CD8-positive, alpha-beta T cell (primary cell): ENCODE measurements at regions of chr6 and their contacts with region 1.

Region 1: GRCh38 chr6:2848851-2849250 is 7.2 kb upstream of the SERPINB1 start:
- DNase-seq: peak; percentile 30 to 87 (median 75)
- ATAC-seq: peak; percentile 88
- H3K4me3 ChIP-seq: no peak overlapping the region
- H3K4me3 Mint-ChIP-seq: peak overlapping the region; percentile 27
- H3K27ac ChIP-seq: peak overlapping the region; percentile 1 to 26
- H3K27ac Mint-ChIP-seq: peak overlapping the region; percentile 92
- H3K4me1 ChIP-seq: peaks cover 27% of the 10 kb centered on the region
- H3K4me1 Mint-ChIP-seq: peaks cover 40% of the 10 kb centered on the region
- H3K27me3 ChIP-seq: no peaks in the 10 kb centered on the region
- H3K27me3 Mint-ChIP-seq: no peaks in the 10 kb centered on the region
- CTCF ChIP-seq: no peak

Region 2: GRCh38 chr6:2630362-2630761 is 218.5 kb before region 1 on chr6:
- CTCF ChIA-PET with region 1: no interaction called
- POLR2A ChIA-PET with region 1: no interaction called
- intact Hi-C with region 1: no loop called
- DNase-seq: no peak
- ATAC-seq: no peak
- H3K4me3 ChIP-seq: no peak overlapping the region
- H3K4me3 Mint-ChIP-seq: no peak overlapping the region
- H3K27ac ChIP-seq: no peak overlapping the region
- H3K27ac Mint-ChIP-seq: no peak overlapping the region
- H3K4me1 ChIP-seq: peaks cover 6% of the 10 kb centered on the region
- H3K4me1 Mint-ChIP-seq: peaks cover 9% of the 10 kb centered on the region
- H3K27me3 ChIP-seq: peaks cover 0 to 6% of the 10 kb centered on the region in 2 experiments
- H3K27me3 Mint-ChIP-seq: no peaks in the 10 kb centered on the region
- CTCF ChIP-seq: no peak

Region 3: GRCh38 chr6:2791124-2791974 is 57.5 kb before region 1 on chr6:
- CTCF ChIA-PET with region 1: interaction called, 16 read pairs
- POLR2A ChIA-PET with region 1: interaction called, 3 read pairs
- intact Hi-C with region 1: loop called (anchors 1 to 2 kb)
- DNase-seq: peak in 8 of 9 experiments; percentile 21 to 75 (median 47)
- ATAC-seq: peak; percentile 79
- H3K4me3 ChIP-seq: no peak overlapping the region
- H3K4me3 Mint-ChIP-seq: peak overlapping the region; percentile 13
- H3K27ac ChIP-seq: peak overlapping the region in 1 of 2 experiments; percentile 10
- H3K27ac Mint-ChIP-seq: peak overlapping the region; percentile 77
- H3K4me1 ChIP-seq: peaks cover 33% of the 10 kb centered on the region
- H3K4me1 Mint-ChIP-seq: peaks cover 32% of the 10 kb centered on the region
- H3K27me3 ChIP-seq: no peaks in the 10 kb centered on the region
- H3K27me3 Mint-ChIP-seq: no peaks in the 10 kb centered on the region
- CTCF ChIP-seq: peak; percentile 73

Region 4: GRCh38 chr6:2827142-2827541 is 21.7 kb before region 1 on chr6:
- CTCF ChIA-PET with region 1: no interaction called
- POLR2A ChIA-PET with region 1: no interaction called
- intact Hi-C with region 1: no loop called
- DNase-seq: no peak
- ATAC-seq: no peak
- H3K4me3 ChIP-seq: no peak overlapping the region
- H3K4me3 Mint-ChIP-seq: no peak overlapping the region
- H3K27ac ChIP-seq: no peak overlapping the region
- H3K27ac Mint-ChIP-seq: no peak overlapping the region
- H3K4me1 ChIP-seq: no peaks in the 10 kb centered on the region
- H3K4me1 Mint-ChIP-seq: no peaks in the 10 kb centered on the region
- H3K27me3 ChIP-seq: no peaks in the 10 kb centered on the region
- H3K27me3 Mint-ChIP-seq: no peaks in the 10 kb centered on the region
- CTCF ChIP-seq: no peak

Region 5: DNA sequence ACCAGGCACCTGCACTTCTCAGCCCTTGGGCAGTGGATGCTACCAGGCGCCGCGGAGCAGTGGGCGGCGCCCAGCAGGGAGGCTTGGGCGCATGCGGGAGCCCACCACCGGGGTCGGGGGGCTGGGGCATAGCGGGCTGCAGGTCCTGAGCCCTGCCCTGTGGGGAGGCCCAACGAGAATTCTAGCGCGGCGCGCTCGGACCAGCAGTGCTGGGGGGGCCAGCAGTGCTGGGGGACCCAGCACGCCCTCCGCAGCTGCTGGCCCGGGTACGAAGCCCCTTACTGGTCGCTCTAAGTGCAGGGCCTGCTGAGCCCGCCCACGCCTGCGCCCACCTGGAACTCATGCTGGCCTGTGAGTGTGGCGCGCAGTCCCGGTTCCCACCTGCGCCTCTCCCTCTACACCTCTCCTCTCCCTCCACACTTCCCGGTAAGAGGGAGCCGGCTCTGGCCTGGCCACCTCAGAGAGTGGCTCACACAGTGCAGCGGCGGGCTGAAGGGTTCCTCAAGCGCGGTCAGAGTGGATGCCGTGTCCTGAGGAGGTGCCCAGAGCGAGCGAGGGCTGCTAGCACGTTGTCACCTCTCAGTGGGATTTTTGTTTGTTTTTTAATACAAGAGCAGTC is 21.3 kb after region 1 on chr6:
- CTCF ChIA-PET with region 1: interaction called, 15 read pairs
- POLR2A ChIA-PET with region 1: interaction called, 4 read pairs
- intact Hi-C with region 1: no loop called
- DNase-seq: no peak
- ATAC-seq: no peak
- H3K4me3 ChIP-seq: no peak overlapping the region
- H3K4me3 Mint-ChIP-seq: no peak overlapping the region
- H3K27ac ChIP-seq: no peak overlapping the region
- H3K27ac Mint-ChIP-seq: no peak overlapping the region
- H3K4me1 ChIP-seq: peaks cover 25% of the 10 kb centered on the region
- H3K4me1 Mint-ChIP-seq: peaks cover 47% of the 10 kb centered on the region
- H3K27me3 ChIP-seq: no peaks in the 10 kb centered on the region
- H3K27me3 Mint-ChIP-seq: no peaks in the 10 kb centered on the region
- CTCF ChIP-seq: no peak

Region 6: GRCh38 chr6:2891768-2892170 is 42.9 kb after region 1 on chr6:
- CTCF ChIA-PET with region 1: interaction called, 49 read pairs
- POLR2A ChIA-PET with region 1: interaction called, 4 read pairs
- intact Hi-C with region 1: no loop called
- DNase-seq: peak; percentile 35 to 89 (median 68)
- ATAC-seq: peak; percentile 94
- H3K4me3 ChIP-seq: peak overlapping the region in 1 of 2 experiments; percentile 9
- H3K4me3 Mint-ChIP-seq: peak overlapping the region; percentile 69
- H3K27ac ChIP-seq: peak overlapping the region; percentile 17 to 51
- H3K27ac Mint-ChIP-seq: peak overlapping the region; percentile 94
- H3K4me1 ChIP-seq: peaks cover 29% of the 10 kb centered on the region
- H3K4me1 Mint-ChIP-seq: peaks cover 67% of the 10 kb centered on the region
- H3K27me3 ChIP-seq: no peaks in the 10 kb centered on the region
- H3K27me3 Mint-ChIP-seq: no peaks in the 10 kb centered on the region
- CTCF ChIP-seq: no peak

Region 7: DNA sequence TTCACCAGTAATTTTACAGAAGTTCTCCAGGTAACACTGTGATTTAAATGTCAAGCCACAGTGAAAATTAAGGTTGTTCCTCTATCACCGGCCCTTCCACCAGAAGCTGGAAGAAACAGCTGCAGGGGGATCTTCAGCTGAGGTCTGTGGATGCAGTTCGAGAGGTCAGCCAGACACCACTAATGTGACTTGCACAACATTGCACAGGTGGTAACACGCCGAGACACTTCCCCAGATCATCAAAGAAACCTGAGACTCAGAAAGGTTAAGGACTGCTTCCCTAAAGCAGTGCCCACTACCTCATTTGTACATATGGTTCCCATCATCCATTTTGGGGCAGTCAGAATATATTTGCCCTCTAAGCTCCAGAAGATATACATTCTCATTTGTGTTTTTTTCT is 62.3 kb after region 1 on chr6:
- CTCF ChIA-PET with region 1: interaction called, 202 read pairs
- POLR2A ChIA-PET with region 1: interaction called, 24 read pairs
- intact Hi-C with region 1: loop called (anchors 1 kb)
- DNase-seq: no peak
- ATAC-seq: no peak
- H3K4me3 ChIP-seq: no peak overlapping the region
- H3K4me3 Mint-ChIP-seq: no peak overlapping the region
- H3K27ac ChIP-seq: no peak overlapping the region
- H3K27ac Mint-ChIP-seq: no peak overlapping the region
- H3K4me1 ChIP-seq: no peaks in the 10 kb centered on the region
- H3K4me1 Mint-ChIP-seq: peaks cover 33% of the 10 kb centered on the region
- H3K27me3 ChIP-seq: no peaks in the 10 kb centered on the region
- H3K27me3 Mint-ChIP-seq: no peaks in the 10 kb centered on the region
- CTCF ChIP-seq: no peak

Region 8: DNA sequence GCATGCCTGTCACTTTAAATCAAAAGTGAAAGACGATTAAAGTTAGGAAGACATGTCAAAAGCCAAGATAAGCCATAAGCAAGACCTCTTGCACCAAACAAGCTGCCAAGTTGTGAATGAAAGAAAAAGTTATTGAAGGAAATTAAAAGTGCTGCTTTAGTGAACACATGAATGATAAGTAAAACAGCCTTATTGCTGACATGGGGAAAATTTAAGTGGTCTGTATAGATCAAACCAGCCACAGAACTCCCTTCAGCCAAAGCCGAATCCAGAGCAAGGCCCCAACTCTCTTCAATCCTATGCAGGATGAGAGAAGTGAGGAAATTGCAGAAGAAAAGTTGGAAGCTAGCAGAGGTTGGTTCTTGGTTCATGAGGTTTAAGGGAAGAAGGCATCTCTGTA is 210.1 kb after region 1 on chr6:
- CTCF ChIA-PET with region 1: no interaction called
- POLR2A ChIA-PET with region 1: no interaction called
- intact Hi-C with region 1: loop called (anchors 2 to 5 kb)
- DNase-seq: no peak
- ATAC-seq: no peak
- H3K4me3 ChIP-seq: no peak overlapping the region
- H3K4me3 Mint-ChIP-seq: no peak overlapping the region
- H3K27ac ChIP-seq: no peak overlapping the region
- H3K27ac Mint-ChIP-seq: no peak overlapping the region
- H3K4me1 ChIP-seq: no peaks in the 10 kb centered on the region
- H3K4me1 Mint-ChIP-seq: peaks cover 13% of the 10 kb centered on the region
- H3K27me3 ChIP-seq: no peaks in the 10 kb centered on the region
- H3K27me3 Mint-ChIP-seq: no peaks in the 10 kb centered on the region
- CTCF ChIP-seq: no peak